ENCODE measurements at regions of chr2 and their contacts with region 1.

Region 1: DNA sequence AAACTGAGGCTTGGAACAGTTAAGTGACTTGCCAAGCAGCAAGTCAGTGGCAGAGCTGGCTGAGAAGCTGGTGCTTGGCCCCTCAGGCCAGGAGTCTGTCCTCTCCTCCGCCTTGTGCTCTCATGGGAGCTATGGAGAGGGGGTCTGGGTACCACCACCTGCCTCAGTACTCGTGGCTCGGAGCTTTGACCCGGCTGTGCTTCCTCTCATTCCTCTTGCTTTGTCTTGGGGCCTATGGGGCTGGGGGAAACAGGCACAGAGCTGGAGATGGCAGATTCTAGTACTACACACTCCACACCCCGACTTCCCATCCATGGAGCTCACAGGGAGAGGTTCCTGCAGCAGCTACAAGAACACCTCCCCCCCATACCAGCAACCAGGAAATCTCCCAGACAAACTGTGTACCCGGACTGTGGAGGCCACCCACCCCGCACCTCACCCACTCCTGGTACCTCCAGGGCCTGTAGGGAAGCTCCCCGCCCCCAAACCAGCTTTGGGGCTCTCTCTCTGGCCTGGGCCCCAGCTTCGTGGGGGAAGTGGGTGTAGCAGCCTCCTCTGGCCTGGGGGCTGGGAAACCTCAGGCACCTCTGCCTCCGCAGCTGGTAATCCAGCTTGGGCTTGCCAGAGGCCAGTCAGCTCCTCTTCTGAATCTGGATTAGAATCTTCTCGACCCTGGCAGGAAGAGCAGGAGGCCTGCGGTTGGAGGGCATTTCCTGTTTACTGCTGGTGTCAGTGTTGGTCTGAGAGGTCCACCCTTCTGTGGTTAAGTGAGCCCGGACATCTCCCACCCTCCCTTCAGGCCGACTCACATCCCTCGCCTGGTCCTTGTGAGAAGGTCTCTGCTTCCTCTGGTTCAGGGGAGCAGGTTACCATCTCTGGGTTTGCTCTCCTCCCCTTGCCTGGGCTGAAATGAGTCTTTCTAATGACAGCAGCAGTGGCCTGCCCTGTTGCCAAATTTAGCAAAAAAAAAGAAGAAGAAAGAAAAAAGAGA is 22.3 kb upstream of the RHOB start:
- DNase-seq: no peak
- ATAC-seq: 0 out of 6 replicates have a peak, but pooled peaks of 1 of the 2 experiments have one; percentile 10
- H3K4me3 ChIP-seq: no peak overlapping the region
- H3K27ac ChIP-seq: peak overlapping the region in 1 of 2 experiments; percentile 3; a peak in 1 of 6 replicates
- H3K4me1 ChIP-seq: 0 out of 3 replicates have a peak, but pooled peaks cover 2% of the 10 kb centered on the region
- CTCF ChIP-seq: no peak
- EP300 ChIP-seq: no peak
- POLR2A ChIP-seq: no peak
- RAD21 ChIP-seq: no peak

Region 2: GRCh38 chr2:20398956-20399567 is 25.5 kb before region 1 on chr2:
- CTCF ChIA-PET with region 1: interaction called, 41 read pairs
- POLR2A ChIA-PET with region 1: no interaction called
- DNase-seq: no peak
- ATAC-seq: no peak
- H3K4me3 ChIP-seq: no peak overlapping the region
- H3K27ac ChIP-seq: no peak overlapping the region
- H3K4me1 ChIP-seq: no peaks in the 10 kb centered on the region
- CTCF ChIP-seq: no peak
- EP300 ChIP-seq: no peak
- POLR2A ChIP-seq: no peak
- RAD21 ChIP-seq: no peak